Ascending aorta (tissue), 2 donors: ENCODE measurements at regions of chr16 and their contacts with region 1.

Region 1: GRCh38 chr16:7090628-7091115 is 242.0 kb upstream of the RBFOX1 start:
- DNase-seq: no peak
- H3K4me3 ChIP-seq: no peak overlapping the region
- H3K27ac ChIP-seq: no peak overlapping the region
- H3K4me1 ChIP-seq: no peaks in the 10 kb centered on the region
- H3K27me3 ChIP-seq: no peaks in the 10 kb centered on the region
- CTCF ChIP-seq: no peak

Region 2: DNA sequence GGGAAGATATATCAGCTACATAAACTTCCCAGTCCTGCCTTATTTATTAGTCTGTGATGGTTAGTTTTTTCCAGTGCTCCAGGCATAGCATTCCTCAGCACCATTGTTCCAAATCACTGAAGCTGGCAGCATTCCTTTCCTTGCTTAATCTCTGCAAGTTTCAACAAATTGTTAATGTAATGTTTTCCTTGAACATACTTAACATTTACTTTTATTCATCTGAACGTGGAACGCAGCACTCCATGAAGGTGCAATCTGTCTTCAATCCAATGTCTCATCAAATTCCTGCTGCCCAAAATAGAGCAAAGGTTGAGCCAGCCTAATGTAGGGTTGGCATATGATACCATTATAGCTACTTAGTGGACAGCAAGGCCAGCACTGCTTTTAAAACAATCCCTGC is 199.2 kb before region 1 on chr16:
- intact Hi-C with region 1: no loop called
- DNase-seq: no peak
- H3K4me3 ChIP-seq: no peak overlapping the region
- H3K27ac ChIP-seq: no peak overlapping the region
- H3K4me1 ChIP-seq: no peaks in the 10 kb centered on the region
- H3K27me3 ChIP-seq: no peaks in the 10 kb centered on the region
- CTCF ChIP-seq: no peak

Region 3: GRCh38 chr16:7017006-7017662 is 73.5 kb before region 1 on chr16:
- intact Hi-C with region 1: no loop called
- DNase-seq: no peak
- H3K4me3 ChIP-seq: no peak overlapping the region
- H3K27ac ChIP-seq: no peak overlapping the region
- H3K4me1 ChIP-seq: no peaks in the 10 kb centered on the region
- H3K27me3 ChIP-seq: no peaks in the 10 kb centered on the region
- CTCF ChIP-seq: no peak

Region 4: DNA sequence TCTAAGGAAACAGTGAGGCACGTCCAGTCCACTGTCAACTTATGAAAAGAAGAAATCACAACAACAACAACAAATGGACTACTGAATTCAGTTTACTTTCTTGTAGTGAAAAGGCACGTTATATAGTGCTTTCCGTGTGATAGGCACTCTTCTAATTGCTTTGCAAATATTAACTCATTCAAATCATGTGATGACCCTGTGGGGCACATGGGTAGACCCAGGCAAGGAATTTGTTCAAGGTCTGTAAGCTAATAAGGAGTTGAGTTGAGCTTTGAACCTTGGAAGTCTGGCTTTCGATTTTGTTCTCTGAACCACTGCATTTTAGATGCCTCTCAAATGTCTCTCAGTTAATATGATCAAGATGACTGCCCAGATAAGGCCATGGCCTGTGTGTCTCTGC is 53.2 kb before region 1 on chr16:
- intact Hi-C with region 1: loop called (anchors 10 kb)
- DNase-seq: no peak
- H3K4me3 ChIP-seq: no peak overlapping the region
- H3K27ac ChIP-seq: no peak overlapping the region
- H3K4me1 ChIP-seq: no peaks in the 10 kb centered on the region
- H3K27me3 ChIP-seq: no peaks in the 10 kb centered on the region
- CTCF ChIP-seq: no peak